Natural killer cell (primary cell): ENCODE measurements at regions of chr20 and their contacts with region 1.

Region 1: DNA sequence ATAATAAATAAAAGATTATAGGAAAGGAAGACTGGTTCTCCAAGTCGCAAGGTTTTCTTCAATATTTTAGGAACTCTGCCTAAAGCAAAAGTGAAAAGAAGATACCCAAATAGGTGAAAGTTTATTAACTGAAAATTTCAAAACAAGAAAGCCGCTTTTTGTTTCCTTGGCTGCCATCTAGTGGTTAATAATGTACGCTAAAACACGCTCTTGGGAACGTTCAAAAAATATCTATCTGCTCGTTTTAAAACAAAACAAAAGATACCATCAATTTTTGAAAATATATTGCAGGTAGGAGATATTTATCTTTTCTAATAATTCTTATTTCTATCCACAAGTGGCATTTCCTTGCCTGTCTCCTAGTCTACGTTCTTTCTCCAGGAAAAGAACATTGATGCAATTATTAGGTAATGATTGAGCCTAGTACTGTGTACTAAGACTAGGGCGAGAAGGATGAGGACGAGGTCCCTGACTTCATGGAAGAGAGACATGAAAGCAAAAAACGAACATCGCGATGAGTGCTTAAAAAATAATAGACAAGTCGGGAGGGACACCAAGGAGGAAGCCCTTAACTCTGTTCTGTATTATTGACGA is 97.2 kb downstream of the SPTLC3 start:
- DNase-seq: peak in 1 of 2 donors; percentile 37
- ATAC-seq: no peak
- H3K4me3 ChIP-seq: no peak overlapping the region
- H3K4me3 Mint-ChIP-seq: no peak overlapping the region
- H3K27ac ChIP-seq: no peak overlapping the region
- H3K27ac Mint-ChIP-seq: no peak overlapping the region
- H3K4me1 ChIP-seq: no peaks in the 10 kb centered on the region
- H3K4me1 Mint-ChIP-seq: no peaks in the 10 kb centered on the region
- H3K27me3 ChIP-seq: no peaks in the 10 kb centered on the region
- H3K27me3 Mint-ChIP-seq: no peaks in the 10 kb centered on the region
- CTCF ChIP-seq: peak; percentile 76

Region 2: DNA sequence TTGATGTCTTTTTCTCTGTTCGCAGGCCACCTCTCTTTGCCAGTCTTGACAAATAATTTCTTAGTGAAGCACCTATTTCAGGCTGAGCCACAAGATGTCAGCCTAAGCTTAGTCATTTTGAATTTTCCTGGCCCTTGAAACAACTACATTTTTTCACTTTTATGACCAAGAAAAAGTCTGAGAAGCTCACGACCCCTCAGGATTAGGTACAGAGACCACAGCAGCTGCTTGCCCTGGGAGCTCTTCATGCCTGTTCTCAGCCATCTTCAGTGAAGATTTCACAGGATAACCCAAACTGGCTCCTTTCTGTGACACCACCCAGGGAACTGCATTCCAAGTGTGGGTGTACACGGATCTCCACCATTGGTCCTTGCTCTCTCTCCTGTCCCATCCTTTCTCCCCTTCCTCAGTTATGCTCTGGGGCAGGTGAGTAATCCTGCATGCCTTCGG is 135.6 kb before region 1 on chr20:
- intact Hi-C with region 1: loop called (anchors 5 kb)
- DNase-seq: peak in 1 of 2 donors; percentile 39
- ATAC-seq: no peak
- H3K4me3 ChIP-seq: no peak overlapping the region
- H3K4me3 Mint-ChIP-seq: no peak overlapping the region
- H3K27ac ChIP-seq: no peak overlapping the region
- H3K27ac Mint-ChIP-seq: no peak overlapping the region
- H3K4me1 ChIP-seq: peaks cover 3% of the 10 kb centered on the region
- H3K4me1 Mint-ChIP-seq: peaks cover 13 to 19% of the 10 kb centered on the region in 2 donors
- H3K27me3 ChIP-seq: no peaks in the 10 kb centered on the region
- H3K27me3 Mint-ChIP-seq: no peaks in the 10 kb centered on the region
- CTCF ChIP-seq: no peak